AG04449 (cell line): ENCODE measurements at regions of chr5 and their contacts with region 1.

Region 1: GRCh38 chr5:111530298-111530740 is 18.0 kb upstream of the STARD4 start:
- DNase-seq: peak; percentile 68
- H3K4me3 ChIP-seq: no peak overlapping the region
- CTCF ChIP-seq: no peak

Region 2: DNA sequence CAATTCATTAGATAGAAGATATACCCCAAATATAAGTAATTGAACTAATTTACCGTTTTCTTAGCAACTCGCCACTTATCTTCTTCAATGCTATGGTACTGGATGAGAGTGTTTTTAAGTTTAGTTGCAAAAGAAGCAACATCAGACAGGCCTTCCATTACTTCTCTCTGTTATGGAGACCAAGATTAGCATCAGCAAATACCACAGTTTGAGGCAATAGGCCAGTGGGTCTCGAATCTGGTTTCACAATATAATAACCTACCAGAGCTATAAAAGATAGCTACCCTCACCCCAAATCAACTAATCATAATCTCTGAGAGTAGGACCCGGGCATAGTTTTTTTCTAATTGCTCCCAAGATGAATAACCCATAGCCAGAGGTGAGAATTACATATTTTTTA is 23.0 kb before region 1 on chr5:
- CTCF ChIA-PET with region 1: interaction called, 15 read pairs
- POLR2A ChIA-PET with region 1: no interaction called
- DNase-seq: no peak
- H3K4me3 ChIP-seq: no peak overlapping the region
- CTCF ChIP-seq: no peak

Region 3: DNA sequence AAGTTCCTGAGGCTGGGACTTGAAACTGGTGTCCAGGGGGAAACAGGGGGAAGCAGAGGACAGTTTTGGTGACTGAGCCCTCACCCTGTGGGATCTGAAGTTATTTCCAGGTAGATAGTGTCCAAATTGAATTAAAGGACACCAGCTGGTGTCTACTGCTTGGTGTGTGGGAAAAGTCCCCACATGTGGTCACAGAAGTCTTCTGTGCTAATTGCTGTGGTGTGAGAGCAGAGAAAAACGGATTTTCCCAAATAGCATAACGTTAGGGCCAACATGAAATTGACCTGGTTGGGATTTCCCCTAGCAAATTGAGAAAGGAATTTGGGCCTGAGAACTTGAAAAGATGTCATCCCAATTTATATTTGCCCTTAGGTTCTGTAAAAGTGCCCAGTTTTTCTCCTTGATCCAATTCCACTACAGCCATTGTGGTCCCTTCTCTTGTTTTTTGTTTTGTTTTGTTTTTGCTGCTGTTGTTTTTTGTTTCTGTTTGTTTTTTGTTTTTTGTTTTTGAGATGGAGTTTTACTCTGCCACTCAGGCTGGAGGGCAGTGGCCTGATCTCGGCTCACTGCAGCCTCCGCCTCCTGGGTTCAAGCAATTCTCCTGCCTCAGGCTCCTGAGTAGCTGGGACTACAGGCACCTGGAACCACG is 12.3 kb before region 1 on chr5:
- CTCF ChIA-PET with region 1: interaction called, 29 read pairs
- POLR2A ChIA-PET with region 1: no interaction called
- DNase-seq: no peak
- H3K4me3 ChIP-seq: no peak overlapping the region
- CTCF ChIP-seq: no peak

Region 4: GRCh38 chr5:112146323-112147226 is 616.3 kb after region 1 on chr5:
- CTCF ChIA-PET with region 1: interaction called, 33 read pairs
- POLR2A ChIA-PET with region 1: no interaction called
- DNase-seq: peak; percentile 65
- H3K4me3 ChIP-seq: no peak overlapping the region
- CTCF ChIP-seq: peak; percentile 50